A673 (cell line): ENCODE measurements at regions of chr16 and their contacts with region 1.

Region 1: GRCh38 chr16:31873556-31874365 is at the start of gene ZNF267:
- DNase-seq: peak; percentile 97
- H3K4me3 ChIP-seq: peak within 1 kb of the TSS; percentile 95
- H3K27ac ChIP-seq: peak within 1 kb of the TSS; percentile 95
- H3K4me1 ChIP-seq: peaks cover 23% of the 10 kb centered on the region
- H3K27me3 ChIP-seq: no peaks in the 10 kb centered on the region
- CTCF ChIP-seq: no peak
- total RNA-seq, gene ZNF267: 17.1 and 23.0 TPM in 2 replicates

Region 2: GRCh38 chr16:31084616-31085260 is 789.0 kb before region 1 on chr16:
- CTCF ChIA-PET with region 1: no interaction called
- POLR2A ChIA-PET with region 1: no interaction called
- intact Hi-C with region 1: loop called (anchors 10 kb)
- DNase-seq: no peak
- H3K4me3 ChIP-seq: no peak overlapping the region
- H3K27ac ChIP-seq: no peak overlapping the region
- H3K4me1 ChIP-seq: no peaks in the 10 kb centered on the region
- H3K27me3 ChIP-seq: no peaks in the 10 kb centered on the region
- CTCF ChIP-seq: no peak

Region 3: DNA sequence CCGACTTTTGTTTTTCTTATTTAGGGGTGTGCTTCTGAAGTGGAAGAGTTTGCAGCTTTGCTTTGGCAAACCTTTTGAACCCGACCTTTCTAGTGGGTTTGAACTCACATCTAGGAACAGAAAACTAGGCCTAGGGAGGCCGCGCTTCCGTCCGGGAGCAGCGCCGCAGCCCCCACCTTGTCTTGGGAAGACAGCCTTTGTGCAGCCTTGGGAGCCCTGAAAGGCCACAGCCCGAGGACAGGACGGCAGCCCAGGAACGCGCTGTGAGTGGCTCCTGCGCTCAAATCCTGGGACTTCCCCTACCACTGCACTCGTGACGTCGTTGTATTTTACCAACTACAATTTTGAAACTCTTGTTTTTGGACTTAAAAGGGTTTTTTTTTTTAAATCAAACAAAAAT is 53.8 kb before region 1 on chr16:
- CTCF ChIA-PET with region 1: no interaction called
- POLR2A ChIA-PET with region 1: interaction called, 16 read pairs
- intact Hi-C with region 1: no loop called
- DNase-seq: no peak
- H3K4me3 ChIP-seq: no peak overlapping the region
- H3K27ac ChIP-seq: no peak overlapping the region
- H3K4me1 ChIP-seq: no peaks in the 10 kb centered on the region
- H3K27me3 ChIP-seq: no peaks in the 10 kb centered on the region
- CTCF ChIP-seq: no peak

Region 4: DNA sequence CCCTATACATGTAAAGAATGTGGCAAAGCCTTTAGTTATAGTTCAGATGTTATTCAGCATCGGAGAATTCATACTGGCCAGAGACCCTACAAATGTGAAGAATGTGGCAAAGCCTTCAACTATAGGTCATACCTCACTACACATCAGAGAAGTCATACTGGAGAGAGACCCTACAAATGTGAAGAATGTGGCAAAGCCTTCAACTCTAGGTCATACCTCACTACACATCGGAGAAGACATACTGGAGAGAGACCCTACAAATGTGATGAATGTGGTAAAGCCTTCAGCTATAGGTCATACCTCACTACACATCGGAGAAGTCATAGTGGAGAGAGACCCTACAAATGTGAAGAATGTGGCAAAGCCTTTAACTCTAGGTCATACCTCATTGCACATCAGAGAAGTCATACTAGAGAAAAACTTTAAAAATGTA is 42.3 kb after region 1 on chr16:
- CTCF ChIA-PET with region 1: no interaction called
- POLR2A ChIA-PET with region 1: interaction called, 14 read pairs
- intact Hi-C with region 1: no loop called
- DNase-seq: no peak
- H3K4me3 ChIP-seq: no peak overlapping the region
- H3K27ac ChIP-seq: no peak overlapping the region
- H3K4me1 ChIP-seq: no peaks in the 10 kb centered on the region
- H3K27me3 ChIP-seq: no peaks in the 10 kb centered on the region
- CTCF ChIP-seq: no peak